ACHN (cell line): ENCODE measurements at regions of chr5 and their contacts with region 1.

Region 1: DNA sequence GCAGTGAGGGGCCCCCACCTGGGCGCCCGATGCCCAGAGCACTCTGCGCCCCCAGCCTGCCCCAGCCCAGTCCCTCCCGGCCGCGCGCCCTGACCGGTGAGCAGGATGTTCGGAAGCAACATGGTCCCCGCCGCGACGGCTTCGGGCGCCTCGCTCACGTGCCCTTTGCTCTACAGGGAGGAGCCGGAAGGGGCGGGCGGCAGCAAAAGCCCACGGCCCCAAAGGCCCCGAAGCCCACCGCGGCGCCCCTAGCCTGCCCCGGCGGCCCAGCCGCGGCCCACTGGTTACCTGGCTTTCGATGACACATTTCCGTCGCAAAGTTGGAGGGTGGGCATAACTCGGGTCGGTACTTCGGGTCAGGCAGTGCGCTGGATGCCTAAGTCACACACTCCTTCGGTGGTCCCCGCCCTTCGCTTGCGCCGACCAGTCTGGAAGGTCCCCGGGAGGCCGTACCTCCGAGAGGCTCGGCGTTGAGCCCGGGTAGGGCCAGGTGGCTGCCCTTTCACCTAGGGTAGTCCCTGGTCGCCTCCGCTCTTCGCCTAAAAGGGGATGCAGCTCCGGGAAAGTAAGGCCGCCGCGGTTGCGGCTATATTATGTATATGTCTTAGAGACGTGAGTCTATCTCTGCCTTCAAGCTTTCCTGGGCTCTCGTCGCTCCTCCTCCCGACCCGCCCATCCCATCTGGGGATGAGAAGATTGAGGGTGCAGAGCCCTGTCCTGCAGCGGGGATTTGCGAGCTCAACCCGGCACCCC is at the starts of genes AK6, RAD17 and TAF9:
- DNase-seq: peak; percentile 85

Region 2: DNA sequence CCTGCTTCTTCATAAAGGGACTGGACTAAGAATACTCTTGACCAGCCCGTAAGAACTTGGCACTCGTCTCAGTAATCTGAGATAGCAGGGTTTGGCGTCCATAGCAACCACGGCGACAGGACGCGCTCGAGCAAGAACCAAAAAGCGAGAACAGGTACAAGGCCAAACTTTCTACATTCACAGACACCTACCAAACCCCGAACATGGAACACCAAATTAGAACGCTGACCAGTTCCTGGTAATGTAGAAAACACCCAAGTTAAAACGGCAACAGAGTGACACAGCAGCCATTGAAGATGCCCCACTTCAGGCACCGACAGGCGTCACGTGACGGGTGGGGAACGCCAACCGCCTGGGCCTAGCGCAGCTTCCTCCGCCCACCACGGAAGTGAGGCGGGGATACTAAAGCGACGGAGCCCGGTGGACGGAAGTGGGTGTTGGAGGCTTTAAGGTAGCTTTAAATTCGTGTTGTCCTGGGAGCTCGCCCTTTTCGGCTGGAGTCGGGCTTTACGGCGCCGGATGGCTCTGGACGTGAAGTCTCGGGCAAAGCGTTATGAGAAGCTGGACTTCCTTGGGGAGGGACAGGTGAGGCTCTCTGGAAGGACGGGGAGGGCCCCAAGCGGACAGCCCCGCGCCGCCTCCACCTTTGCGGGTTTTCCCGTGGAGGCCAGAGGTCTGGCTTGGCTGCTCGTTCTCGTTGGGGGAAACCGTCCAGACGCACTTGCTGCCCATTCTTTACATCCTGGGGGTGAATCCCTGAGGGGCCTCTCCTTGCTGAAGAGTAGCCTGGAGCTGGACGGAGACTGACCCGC is 134.9 kb before region 1 on chr5 and contains the start of gene CDK7:
- in situ Hi-C with region 1: no loop called
- DNase-seq: peak; percentile 90

Region 3: GRCh38 chr5:69265931-69266330 is 103.6 kb before region 1 on chr5:
- in situ Hi-C with region 1: loop called (anchors 25 kb)
- DNase-seq: peak; percentile 38